Dendritic cell treated with granulocyte-macrophage colony-stimulating factor and Interleukin-4, amounts not matched to agents 40 ng/mL and 50 ng/mL, for 4 days (primary cell): ENCODE measurements at regions of chr13 and their contacts with region 1.

Region 1: GRCh38 chr13:42991892-42992763 is at the start of gene EPSTI1:
- H3K4me3 Mint-ChIP-seq: peak within 1 kb of the TSS; percentile 96
- H3K27ac Mint-ChIP-seq: peak within 1 kb of the TSS; percentile 98
- H3K4me1 Mint-ChIP-seq: peaks cover 38% of the 10 kb centered on the region
- H3K27me3 Mint-ChIP-seq: no peaks in the 10 kb centered on the region

Region 2: GRCh38 chr13:42821437-42821836 is 170.7 kb before region 1 on chr13:
- intact Hi-C with region 1: no loop called
- H3K4me3 Mint-ChIP-seq: no peak overlapping the region
- H3K27ac Mint-ChIP-seq: no peak overlapping the region
- H3K4me1 Mint-ChIP-seq: peaks cover 9% of the 10 kb centered on the region
- H3K27me3 Mint-ChIP-seq: no peaks in the 10 kb centered on the region

Region 3: GRCh38 chr13:43044720-43045301 is 52.7 kb after region 1 on chr13:
- intact Hi-C with region 1: loop called (anchors 5 kb)
- H3K4me3 Mint-ChIP-seq: peak overlapping the region; percentile 61
- H3K27ac Mint-ChIP-seq: peak overlapping the region; percentile 95
- H3K4me1 Mint-ChIP-seq: peaks cover 66% of the 10 kb centered on the region
- H3K27me3 Mint-ChIP-seq: no peaks in the 10 kb centered on the region

Region 4: GRCh38 chr13:44425041-44425814 is 1433.1 kb after region 1 on chr13:
- intact Hi-C with region 1: no loop called
- H3K4me3 Mint-ChIP-seq: no peak overlapping the region
- H3K27ac Mint-ChIP-seq: no peak overlapping the region
- H3K4me1 Mint-ChIP-seq: no peaks in the 10 kb centered on the region
- H3K27me3 Mint-ChIP-seq: peaks cover 63% of the 10 kb centered on the region